Activated CD4-positive, alpha-beta T cell treated with anti-CD3 and anti-CD28 coated beads for 36 hours (primary cell): ENCODE measurements at regions of chr17 and their contacts with region 1.

Region 1: DNA sequence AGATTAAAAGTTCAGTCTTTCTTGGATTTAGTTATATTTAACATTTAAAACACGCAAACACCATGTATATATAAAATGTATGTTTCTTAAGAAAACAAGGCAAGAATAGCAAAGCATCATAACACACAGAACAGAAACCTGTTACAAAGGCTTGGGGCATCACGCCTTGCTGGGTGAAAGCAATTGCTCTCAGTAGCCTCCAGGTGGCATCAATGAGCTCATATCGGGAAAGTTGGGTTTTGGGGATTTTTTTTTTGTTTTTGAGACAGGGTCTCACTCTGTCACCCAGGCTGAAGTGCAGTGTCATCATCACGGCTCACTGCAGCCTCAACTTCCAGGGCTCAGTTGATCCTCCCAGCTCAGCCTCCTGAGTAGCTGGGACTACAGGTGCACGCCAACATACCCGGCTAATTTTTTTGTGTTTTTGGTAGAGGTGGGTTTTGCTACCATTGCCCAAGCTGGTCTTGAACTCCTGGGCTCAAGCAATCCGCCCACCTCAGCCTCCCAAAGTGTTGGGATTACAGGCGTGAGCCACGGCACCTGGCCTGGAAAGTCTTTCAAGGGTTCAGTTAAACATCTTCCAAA is 56.9 kb downstream of the CYB5D2 start:
- DNase-seq: peak; percentile 60
- ATAC-seq: peak; percentile 79
- H3K4me3 Mint-ChIP-seq: no peak overlapping the region
- H3K27ac Mint-ChIP-seq: no peak overlapping the region
- H3K4me1 Mint-ChIP-seq: peaks cover 19% of the 10 kb centered on the region
- H3K27me3 Mint-ChIP-seq: no peaks in the 10 kb centered on the region

Region 2: DNA sequence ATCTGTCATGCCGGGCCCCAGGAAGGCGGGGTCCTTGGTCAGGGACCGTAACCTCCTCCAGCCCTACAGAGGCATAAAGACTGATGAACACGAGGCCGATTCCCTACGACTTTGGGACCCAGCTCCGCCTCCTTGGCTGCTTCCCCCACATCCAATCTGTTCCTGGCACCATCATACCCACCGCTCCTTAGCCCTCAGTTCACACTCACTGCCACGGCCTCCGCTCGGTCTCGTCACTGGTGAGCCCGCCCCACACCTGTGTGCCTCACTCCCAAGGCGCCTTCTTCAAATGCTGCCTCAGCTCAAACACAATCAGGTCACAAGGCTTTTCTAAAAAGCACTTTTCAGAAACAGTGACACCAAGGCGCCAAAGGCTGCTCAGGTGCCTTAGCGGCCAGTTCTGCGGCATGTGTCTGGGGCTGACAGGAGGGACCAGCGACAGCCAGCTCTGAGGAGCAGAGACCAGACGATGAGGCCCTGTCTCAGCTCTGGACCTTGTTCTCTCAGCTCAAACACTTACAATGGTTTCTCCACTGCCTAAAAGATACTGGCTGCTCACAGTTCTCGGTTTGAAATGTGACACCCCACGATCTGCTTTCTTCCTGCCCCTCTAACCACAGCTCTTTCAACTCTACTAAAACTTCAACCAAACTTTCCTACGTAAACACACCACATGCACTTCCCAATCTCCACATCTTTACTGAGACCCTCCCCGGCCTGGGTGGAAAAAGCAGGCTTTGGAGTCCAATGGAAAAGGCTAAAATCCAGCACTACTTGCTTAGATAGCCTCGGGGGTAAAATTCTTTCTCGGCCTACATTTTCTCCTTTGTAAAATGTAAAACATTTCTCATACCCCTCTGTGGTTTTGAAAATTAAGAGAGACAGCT is 23.7 kb before region 1 on chr17:
- CTCF ChIA-PET with region 1: interaction called, 10 read pairs
- POLR2A ChIA-PET with region 1: no interaction called
- intact Hi-C with region 1: no loop called
- DNase-seq: peak; percentile 66
- ATAC-seq: peak; percentile 81
- H3K4me3 Mint-ChIP-seq: peak overlapping the region; percentile 48
- H3K27ac Mint-ChIP-seq: peak overlapping the region; percentile 96
- H3K4me1 Mint-ChIP-seq: peaks cover 49% of the 10 kb centered on the region
- H3K27me3 Mint-ChIP-seq: no peaks in the 10 kb centered on the region

Region 3: DNA sequence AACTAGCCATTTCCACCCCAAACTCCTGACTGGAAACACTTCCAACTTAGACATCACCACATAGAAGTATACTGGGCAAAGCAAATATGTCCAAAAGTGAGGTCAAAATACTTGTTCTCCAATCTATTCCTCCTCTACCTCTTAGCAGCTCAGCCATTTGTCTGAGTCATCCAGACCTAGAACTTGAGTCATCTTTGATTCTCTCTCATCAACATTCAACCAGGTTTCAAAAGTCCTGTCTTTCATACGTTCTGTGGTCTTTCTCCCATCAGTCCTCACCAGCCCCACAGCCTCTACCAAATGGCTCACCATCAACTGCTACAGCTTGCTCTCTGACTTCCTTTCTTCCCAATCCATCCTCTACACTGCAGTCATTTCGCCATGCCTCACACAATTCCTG is 57.0 kb after region 1 on chr17:
- CTCF ChIA-PET with region 1: no interaction called
- POLR2A ChIA-PET with region 1: no interaction called
- intact Hi-C with region 1: no loop called
- DNase-seq: no peak
- ATAC-seq: peak; percentile 92
- H3K4me3 Mint-ChIP-seq: no peak overlapping the region
- H3K27ac Mint-ChIP-seq: peak overlapping the region; percentile 22
- H3K4me1 Mint-ChIP-seq: peaks cover 45% of the 10 kb centered on the region
- H3K27me3 Mint-ChIP-seq: no peaks in the 10 kb centered on the region